Astrocyte of the cerebellum (primary cell): ENCODE measurements at regions of chr10 and their contacts with region 1.

Region 1: DNA sequence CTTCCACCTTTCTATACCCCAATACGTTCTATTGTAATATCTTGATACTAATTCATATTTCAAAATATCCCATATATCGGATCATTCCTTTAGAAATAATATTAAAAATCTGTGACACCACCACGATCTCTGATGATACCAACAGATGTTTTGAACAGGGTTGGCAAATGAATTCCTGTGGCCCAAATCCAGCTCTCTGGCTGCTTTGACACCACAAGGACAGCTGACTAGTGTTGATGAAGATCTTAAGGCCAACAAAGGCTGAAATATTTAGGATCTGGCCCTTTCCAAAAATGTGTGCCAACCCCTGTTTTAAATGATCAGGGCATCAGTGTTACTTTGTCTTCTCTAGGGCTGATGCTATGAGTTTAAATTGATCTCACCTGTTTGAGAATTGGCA is 380.7 kb upstream of the PFKP start:
- DNase-seq: no peak
- H3K4me3 ChIP-seq: no peak overlapping the region
- CTCF ChIP-seq: no peak

Region 2: DNA sequence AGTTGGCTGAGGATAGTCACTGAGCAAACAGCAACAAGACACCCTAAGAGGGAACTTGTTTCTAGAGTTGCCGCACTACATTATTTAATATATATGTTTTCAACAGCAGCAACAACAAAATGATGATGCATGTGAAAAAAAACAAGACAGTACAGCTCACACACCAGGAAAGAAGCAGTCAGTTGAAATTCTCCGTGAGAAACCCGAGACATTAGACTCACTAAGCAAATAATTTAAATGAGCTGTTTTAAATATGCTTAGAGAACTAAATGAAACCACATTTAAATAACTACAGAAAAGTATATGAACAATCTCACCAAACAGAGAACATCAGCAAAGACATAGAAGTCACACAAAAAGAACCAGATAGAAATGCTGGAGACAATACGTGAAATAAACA is 45.7 kb before region 1 on chr10:
- in situ Hi-C with region 1: loop called (anchors 5 kb)
- DNase-seq: no peak
- H3K4me3 ChIP-seq: no peak overlapping the region
- CTCF ChIP-seq: no peak

Region 3: GRCh38 chr10:2744547-2745200 is 58.0 kb after region 1 on chr10:
- in situ Hi-C with region 1: loop called (anchors 5 kb)
- DNase-seq: no peak
- H3K4me3 ChIP-seq: no peak overlapping the region
- CTCF ChIP-seq: no peak

Region 4: DNA sequence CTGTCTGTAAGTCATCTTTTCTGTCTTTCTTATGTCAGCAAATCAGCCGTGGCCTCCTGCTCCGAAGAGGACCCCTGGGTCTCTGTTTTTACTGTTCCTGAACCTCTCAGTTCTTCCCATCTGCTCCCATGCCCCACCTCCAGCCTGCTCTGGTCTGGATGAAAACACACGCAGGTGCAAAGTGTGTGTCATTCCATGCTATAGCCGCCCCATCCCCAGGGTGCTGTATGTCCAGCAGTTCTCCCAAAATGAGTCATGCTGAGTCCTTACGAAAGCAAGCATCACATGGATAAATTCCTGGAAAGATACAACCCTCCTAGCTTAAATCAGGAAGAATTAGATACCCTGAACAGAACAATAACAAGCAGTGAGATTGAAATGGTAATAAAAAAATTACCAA is 80.6 kb after region 1 on chr10:
- in situ Hi-C with region 1: loop called (anchors 5 kb)
- DNase-seq: no peak
- H3K4me3 ChIP-seq: no peak overlapping the region
- CTCF ChIP-seq: no peak